H1 (cell line): ENCODE measurements at regions of chr11 and their contacts with region 1.

Region 1: DNA sequence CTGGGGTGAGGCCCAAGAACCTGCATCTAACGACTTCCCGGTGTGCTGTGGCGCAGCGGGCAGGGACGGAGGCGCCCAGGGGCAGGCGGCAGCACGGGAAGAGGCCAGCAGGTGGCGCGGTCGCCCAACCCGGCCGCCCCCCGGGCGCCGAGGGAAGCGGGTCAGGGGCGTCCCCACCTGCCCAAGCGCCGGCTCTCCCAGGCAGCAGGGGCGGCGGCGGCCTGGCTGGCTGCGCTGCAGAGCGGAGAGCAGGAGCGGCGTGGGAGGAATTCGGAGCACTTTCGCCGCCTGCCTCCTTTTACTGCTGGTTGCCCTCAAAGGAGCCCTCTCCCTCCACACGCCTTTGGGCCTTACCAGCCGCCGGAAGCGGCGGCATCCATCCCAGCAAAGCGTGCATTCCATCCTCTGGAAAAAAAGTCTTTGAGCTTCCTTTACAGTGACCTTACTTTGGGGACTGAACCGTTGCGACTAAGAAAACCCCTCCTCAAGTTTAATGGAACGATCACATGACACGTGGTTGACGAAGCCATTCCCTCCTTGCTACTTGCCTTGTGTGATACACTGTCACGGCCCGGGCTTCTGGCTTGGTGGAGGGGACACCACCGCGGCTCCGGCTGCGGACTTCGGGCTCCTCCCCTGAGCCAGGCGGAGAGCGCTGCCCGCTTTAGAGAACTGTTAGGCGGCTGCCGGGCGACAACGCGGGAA is 106.8 kb upstream of the CLMP start:
- DNase-seq: peak; percentile 46 to 93
- H3K4me3 ChIP-seq: peak overlapping the region; percentile 42 to 80 (median 61)
- H3K27ac ChIP-seq: no peak overlapping the region
- H3K4me1 ChIP-seq: peaks cover 0 to 11% (median 6%) of the 10 kb centered on the region in 4 experiments; a peak in 6 of 7 replicates
- H3K27me3 ChIP-seq: peaks cover 2 to 22% (median 18%) of the 10 kb centered on the region in 4 experiments
- CTCF ChIP-seq: peak; percentile 81 to 95 (median 91)
- EP300 ChIP-seq: no peak
- POLR2A ChIP-seq: no peak
- RAD21 ChIP-seq: peak; percentile 83 to 92

Region 2: DNA sequence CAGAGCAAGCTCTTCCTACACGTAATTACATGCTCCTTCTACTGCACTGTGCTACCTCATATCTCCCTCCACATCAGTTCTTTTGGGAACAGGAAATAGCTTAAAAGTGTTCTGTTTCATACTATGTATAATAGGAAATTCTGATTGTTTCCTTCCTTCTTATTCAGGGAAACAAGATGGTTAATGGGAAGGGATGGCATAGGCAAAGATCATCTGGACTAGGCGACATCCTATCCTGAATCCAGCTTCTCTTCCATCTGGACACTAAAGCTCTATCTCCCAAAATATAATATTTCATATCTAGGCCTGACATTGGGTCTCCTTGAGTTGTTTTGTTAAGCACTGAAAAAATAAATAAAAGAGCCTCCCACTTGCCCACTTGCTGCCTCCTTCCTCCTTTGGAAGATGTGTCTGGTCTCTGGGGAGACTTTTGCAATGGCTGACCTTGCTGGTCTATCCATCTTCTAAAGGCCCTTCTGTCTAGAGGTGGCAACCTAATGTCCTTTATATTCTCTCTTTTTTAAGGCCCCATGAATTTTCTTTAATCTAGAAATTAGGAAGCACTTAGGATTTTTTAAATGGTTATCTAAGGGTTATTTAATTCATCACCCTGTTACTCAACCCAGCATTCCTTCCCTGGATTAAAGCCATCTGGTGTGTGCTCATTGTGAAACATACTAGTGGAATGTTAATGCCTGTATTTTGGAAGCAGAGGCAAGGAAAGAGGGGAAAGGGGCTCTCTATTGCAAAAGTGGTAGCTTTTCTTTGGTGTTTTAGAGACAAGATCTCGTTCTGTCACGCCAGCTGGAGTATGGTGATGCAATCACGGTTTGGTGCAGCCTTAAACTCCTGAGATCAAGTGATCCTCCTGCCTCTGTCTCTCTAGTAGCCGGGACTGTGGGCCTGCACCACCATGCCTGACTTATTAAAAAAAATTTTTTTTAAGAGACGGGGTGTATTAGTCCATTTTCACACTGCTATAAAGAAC is 127.4 kb before region 1 on chr11:
- CTCF ChIA-PET with region 1: no interaction called
- POLR2A ChIA-PET with region 1: no interaction called
- DNase-seq: no peak
- H3K4me3 ChIP-seq: no peak overlapping the region
- H3K27ac ChIP-seq: no peak overlapping the region
- H3K4me1 ChIP-seq: peaks cover 0 to 10% (median 6%) of the 10 kb centered on the region in 4 experiments; a peak in 4 of 7 replicates
- H3K27me3 ChIP-seq: no peaks in the 10 kb centered on the region
- CTCF ChIP-seq: no peak
- EP300 ChIP-seq: no peak
- POLR2A ChIP-seq: no peak
- RAD21 ChIP-seq: no peak

Region 3: GRCh38 chr11:123195188-123196059 is 106.4 kb before region 1 on chr11 and contains the start of gene CLMP:
- CTCF ChIA-PET with region 1: no interaction called
- POLR2A ChIA-PET with region 1: no interaction called
- DNase-seq: peak in 1 of 2 experiments; percentile 83
- H3K4me3 ChIP-seq: peak within 1 kb of the TSS; percentile 53 to 76 (median 69)
- H3K27ac ChIP-seq: peak within 1 kb of the TSS; percentile 54; the same call in 1 of the 2 replicates
- H3K4me1 ChIP-seq: peaks cover 4 to 29% (median 19%) of the 10 kb centered on the region in 4 experiments
- H3K27me3 ChIP-seq: peaks cover 0 to 6% (median 3%) of the 10 kb centered on the region in 4 experiments; a peak in 4 of 7 replicates
- CTCF ChIP-seq: no peak
- EP300 ChIP-seq: peak in 1 of 2 experiments; percentile 90; a peak in 1 of 3 replicates
- POLR2A ChIP-seq: peak; percentile 26 to 40; a peak in 1 of 3 replicates
- RAD21 ChIP-seq: no peak
- total RNA-seq, gene CLMP: 20.8 and 24.1 TPM in 2 replicates

Region 4: GRCh38 chr11:123316003-123316402 is 14.2 kb after region 1 on chr11:
- CTCF ChIA-PET with region 1: interaction called, 30 read pairs
- POLR2A ChIA-PET with region 1: interaction called, 4 read pairs
- DNase-seq: no peak
- H3K4me3 ChIP-seq: no peak overlapping the region
- H3K27ac ChIP-seq: no peak overlapping the region
- H3K4me1 ChIP-seq: peaks cover 7 to 16% (median 10%) of the 10 kb centered on the region in 4 experiments; a peak in 6 of 7 replicates
- H3K27me3 ChIP-seq: no peaks in the 10 kb centered on the region
- CTCF ChIP-seq: no peak
- EP300 ChIP-seq: no peak
- POLR2A ChIP-seq: no peak
- RAD21 ChIP-seq: no peak

Region 5: GRCh38 chr11:123328281-123328867 is 26.5 kb after region 1 on chr11:
- CTCF ChIA-PET with region 1: interaction called, 10 read pairs
- POLR2A ChIA-PET with region 1: no interaction called
- DNase-seq: no peak
- H3K4me3 ChIP-seq: no peak overlapping the region
- H3K27ac ChIP-seq: no peak overlapping the region
- H3K4me1 ChIP-seq: no peaks in the 10 kb centered on the region
- H3K27me3 ChIP-seq: no peaks in the 10 kb centered on the region
- CTCF ChIP-seq: no peak
- EP300 ChIP-seq: no peak
- POLR2A ChIP-seq: no peak
- RAD21 ChIP-seq: no peak

Region 6: GRCh38 chr11:123357961-123358841 is 56.4 kb after region 1 on chr11:
- CTCF ChIA-PET with region 1: interaction called, 13 read pairs
- POLR2A ChIA-PET with region 1: interaction called, 3 read pairs
- DNase-seq: peak in 1 of 2 experiments; percentile 68
- H3K4me3 ChIP-seq: peak overlapping the region; percentile 66 to 78 (median 75)
- H3K27ac ChIP-seq: no peak overlapping the region
- H3K4me1 ChIP-seq: peaks cover 0 to 3% (median 0%) of the 10 kb centered on the region in 4 experiments; a peak in 1 of 7 replicates
- H3K27me3 ChIP-seq: peaks cover 10 to 44% (median 32%) of the 10 kb centered on the region in 4 experiments
- CTCF ChIP-seq: peak; percentile 9 to 44 (median 42); a peak in 2 of 4 replicates
- EP300 ChIP-seq: no peak
- POLR2A ChIP-seq: no peak
- RAD21 ChIP-seq: peak; percentile 41 to 60

Region 7: GRCh38 chr11:124301482-124302027 is 999.7 kb after region 1 on chr11:
- CTCF ChIA-PET with region 1: no interaction called
- POLR2A ChIA-PET with region 1: no interaction called
- DNase-seq: no peak
- H3K4me3 ChIP-seq: no peak overlapping the region
- H3K27ac ChIP-seq: no peak overlapping the region
- H3K4me1 ChIP-seq: peaks cover 0 to 6% (median 4%) of the 10 kb centered on the region in 4 experiments; a peak in 2 of 7 replicates
- H3K27me3 ChIP-seq: no peaks in the 10 kb centered on the region
- CTCF ChIP-seq: no peak
- EP300 ChIP-seq: no peak
- POLR2A ChIP-seq: no peak
- RAD21 ChIP-seq: no peak